CD4-positive, alpha-beta T cell (primary cell): ENCODE measurements at regions of chr4 and their contacts with region 1.

Region 1: DNA sequence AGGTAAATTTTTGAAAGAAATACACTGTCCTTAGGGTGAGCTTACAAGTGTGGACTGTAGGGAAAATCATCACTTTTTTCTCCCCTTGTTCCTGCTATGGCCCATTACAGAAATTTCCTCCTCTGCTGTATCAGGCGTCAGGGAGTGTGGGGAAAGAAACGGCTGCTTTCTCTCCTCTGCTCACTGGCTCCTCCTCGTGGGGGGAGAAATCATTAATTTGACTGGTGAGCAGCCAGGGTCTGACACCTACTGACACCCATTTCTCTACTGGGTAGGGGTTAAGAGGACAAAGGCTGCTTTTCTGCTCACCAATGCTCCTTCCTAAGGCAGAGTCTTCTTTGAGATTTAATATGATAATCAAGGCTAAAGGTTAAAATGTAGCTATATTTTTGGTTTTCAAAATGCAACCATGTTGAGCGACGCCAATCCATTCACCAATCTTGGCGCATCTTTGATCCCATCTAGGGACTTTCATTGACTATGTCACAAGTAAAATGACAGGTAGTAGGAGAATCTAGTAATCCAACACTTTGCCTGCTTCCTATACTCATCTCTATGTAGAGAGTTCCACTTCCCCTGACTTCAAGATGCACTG is 25.1 kb downstream of the SETD7 start:
- DNase-seq: peak; percentile 40 to 75 (median 53)
- ATAC-seq: peak; percentile 84
- H3K4me3 ChIP-seq: no peak overlapping the region
- H3K4me3 Mint-ChIP-seq: no peak overlapping the region
- H3K27ac ChIP-seq: no peak overlapping the region
- H3K27ac Mint-ChIP-seq: no peak overlapping the region
- H3K4me1 ChIP-seq: peaks cover 9% of the 10 kb centered on the region
- H3K4me1 Mint-ChIP-seq: peaks cover 5% of the 10 kb centered on the region
- H3K27me3 ChIP-seq: no peaks in the 10 kb centered on the region
- H3K27me3 Mint-ChIP-seq: no peaks in the 10 kb centered on the region
- CTCF ChIP-seq: peak; percentile 76

Region 2: DNA sequence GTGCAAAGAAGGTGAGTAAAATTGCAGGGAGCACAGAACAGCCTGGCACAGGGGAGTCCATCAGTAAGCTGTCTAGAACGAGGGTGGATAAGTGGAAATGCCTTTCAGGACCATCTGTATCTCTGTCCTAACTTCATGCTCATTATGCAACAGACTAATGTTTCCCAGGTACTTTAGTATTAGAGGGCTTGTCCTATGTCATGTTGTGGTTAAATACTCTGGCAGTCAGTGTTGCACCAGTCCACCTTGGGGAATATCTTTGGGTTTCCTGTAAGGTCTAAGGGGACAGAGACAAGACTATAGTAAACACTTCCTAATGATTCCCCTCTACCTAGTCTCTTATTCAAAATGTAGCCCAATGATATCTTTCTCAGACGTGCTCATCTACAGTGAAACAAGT is 494.0 kb before region 1 on chr4:
- CTCF ChIA-PET with region 1: no interaction called
- POLR2A ChIA-PET with region 1: no interaction called
- intact Hi-C with region 1: no loop called
- DNase-seq: no peak
- ATAC-seq: no peak
- H3K4me3 ChIP-seq: no peak overlapping the region
- H3K4me3 Mint-ChIP-seq: no peak overlapping the region
- H3K27ac ChIP-seq: no peak overlapping the region
- H3K27ac Mint-ChIP-seq: no peak overlapping the region
- H3K4me1 ChIP-seq: no peaks in the 10 kb centered on the region
- H3K4me1 Mint-ChIP-seq: peaks cover 15% of the 10 kb centered on the region
- H3K27me3 ChIP-seq: no peaks in the 10 kb centered on the region
- H3K27me3 Mint-ChIP-seq: no peaks in the 10 kb centered on the region
- CTCF ChIP-seq: no peak

Region 3: GRCh38 chr4:139229534-139230039 is 301.3 kb before region 1 on chr4:
- CTCF ChIA-PET with region 1: interaction called, 4 read pairs
- POLR2A ChIA-PET with region 1: no interaction called
- intact Hi-C with region 1: loop called (anchors 5 to 10 kb)
- DNase-seq: peak in 4 of 14 experiments; percentile 17 to 71 (median 67)
- ATAC-seq: peak; percentile 71
- H3K4me3 ChIP-seq: no peak overlapping the region
- H3K4me3 Mint-ChIP-seq: no peak overlapping the region
- H3K27ac ChIP-seq: no peak overlapping the region
- H3K27ac Mint-ChIP-seq: no peak overlapping the region
- H3K4me1 ChIP-seq: no peaks in the 10 kb centered on the region
- H3K4me1 Mint-ChIP-seq: no peaks in the 10 kb centered on the region
- H3K27me3 ChIP-seq: no peaks in the 10 kb centered on the region
- H3K27me3 Mint-ChIP-seq: no peaks in the 10 kb centered on the region
- CTCF ChIP-seq: peak; percentile 82

Region 4: DNA sequence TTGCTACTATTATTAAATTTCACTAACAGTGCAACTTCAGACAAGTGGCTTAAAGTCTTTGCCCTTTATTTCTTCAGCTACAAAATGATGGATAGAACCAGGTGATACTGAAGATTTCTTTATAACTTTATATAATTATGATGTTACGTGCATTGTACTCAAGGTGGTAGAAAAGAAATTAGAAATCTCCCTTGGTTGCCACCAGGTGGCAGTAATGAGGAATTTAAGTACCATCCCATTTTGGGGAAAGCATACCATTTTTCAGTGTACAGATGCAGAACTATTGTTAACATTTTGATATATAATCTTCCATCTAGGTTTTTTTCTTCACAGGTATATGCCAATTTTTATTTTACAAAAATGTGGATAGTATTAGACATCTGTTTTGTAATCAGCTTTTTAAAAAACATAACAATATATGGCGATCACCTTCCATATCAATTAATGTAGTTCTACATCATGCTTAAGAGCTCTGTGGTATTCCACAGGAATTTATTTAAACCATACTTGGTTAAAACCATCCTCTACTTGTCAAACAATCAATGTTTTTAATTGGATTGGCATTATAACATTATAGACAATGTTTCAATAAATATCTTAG is 114.8 kb before region 1 on chr4:
- CTCF ChIA-PET with region 1: no interaction called
- POLR2A ChIA-PET with region 1: no interaction called
- intact Hi-C with region 1: loop called (anchors 2 to 5 kb)
- DNase-seq: peak in 4 of 14 experiments; percentile 50 to 77 (median 61)
- ATAC-seq: peak; percentile 32
- H3K4me3 ChIP-seq: no peak overlapping the region
- H3K4me3 Mint-ChIP-seq: no peak overlapping the region
- H3K27ac ChIP-seq: no peak overlapping the region
- H3K27ac Mint-ChIP-seq: no peak overlapping the region
- H3K4me1 ChIP-seq: peaks cover 5% of the 10 kb centered on the region
- H3K4me1 Mint-ChIP-seq: peaks cover 5% of the 10 kb centered on the region
- H3K27me3 ChIP-seq: no peaks in the 10 kb centered on the region
- H3K27me3 Mint-ChIP-seq: no peaks in the 10 kb centered on the region
- CTCF ChIP-seq: peak; percentile 77

Region 5: DNA sequence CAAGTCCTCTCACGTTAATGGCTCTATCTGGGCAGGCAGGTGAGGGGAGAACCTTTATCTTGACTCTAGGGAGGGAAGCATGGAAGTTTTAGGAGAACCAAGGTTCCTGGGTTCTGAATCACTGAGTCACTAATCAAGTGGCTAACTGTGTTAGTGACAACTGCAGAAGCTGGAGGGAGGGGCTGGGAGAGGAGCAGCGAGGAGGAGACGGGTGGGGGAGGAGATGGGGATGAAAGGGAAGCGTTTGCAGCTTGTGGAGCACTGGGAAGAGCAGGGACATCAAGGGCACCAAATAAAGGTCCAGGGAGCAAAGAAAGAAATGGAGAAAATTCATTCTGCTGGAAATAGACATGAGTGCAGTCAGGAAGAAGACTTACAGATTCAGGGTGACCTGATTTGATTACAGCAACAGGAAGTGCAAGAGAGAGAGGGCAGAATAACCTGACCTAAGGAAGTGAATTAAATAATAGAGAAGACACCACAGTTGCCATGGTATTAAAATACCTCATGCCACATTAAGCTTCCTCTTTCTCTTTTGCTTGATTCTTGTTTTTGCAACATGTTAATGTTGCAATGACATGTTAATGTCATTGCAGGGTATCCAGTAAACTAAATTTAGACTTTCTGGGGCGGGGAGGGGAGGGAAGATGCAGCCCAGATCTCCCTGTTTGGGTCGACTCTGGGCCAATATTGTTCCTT is 29.6 kb after region 1 on chr4:
- CTCF ChIA-PET with region 1: interaction called, 3 read pairs
- POLR2A ChIA-PET with region 1: interaction called, 9 read pairs
- intact Hi-C with region 1: loop called (anchors 2 to 5 kb)
- DNase-seq: peak in 4 of 14 experiments; percentile 9 to 84 (median 76)
- ATAC-seq: peak; percentile 35
- H3K4me3 ChIP-seq: peak overlapping the region; percentile 4
- H3K4me3 Mint-ChIP-seq: peak overlapping the region; percentile 78
- H3K27ac ChIP-seq: peak overlapping the region in 1 of 2 donors; percentile 65
- H3K27ac Mint-ChIP-seq: peak overlapping the region; percentile 99
- H3K4me1 ChIP-seq: peaks cover 36% of the 10 kb centered on the region
- H3K4me1 Mint-ChIP-seq: peaks cover 42% of the 10 kb centered on the region
- H3K27me3 ChIP-seq: no peaks in the 10 kb centered on the region
- H3K27me3 Mint-ChIP-seq: peaks cover 9% of the 10 kb centered on the region
- CTCF ChIP-seq: no peak

Region 6: GRCh38 chr4:139642364-139642763 is 111.4 kb after region 1 on chr4:
- CTCF ChIA-PET with region 1: no interaction called
- POLR2A ChIA-PET with region 1: no interaction called
- intact Hi-C with region 1: no loop called
- DNase-seq: no peak
- ATAC-seq: no peak
- H3K4me3 ChIP-seq: no peak overlapping the region
- H3K4me3 Mint-ChIP-seq: no peak overlapping the region
- H3K27ac ChIP-seq: no peak overlapping the region
- H3K27ac Mint-ChIP-seq: no peak overlapping the region
- H3K4me1 ChIP-seq: no peaks in the 10 kb centered on the region
- H3K4me1 Mint-ChIP-seq: no peaks in the 10 kb centered on the region
- H3K27me3 ChIP-seq: no peaks in the 10 kb centered on the region
- H3K27me3 Mint-ChIP-seq: peaks cover 5% of the 10 kb centered on the region
- CTCF ChIP-seq: no peak

Region 7: GRCh38 chr4:139720540-139721205 is 189.7 kb after region 1 on chr4:
- CTCF ChIA-PET with region 1: no interaction called
- POLR2A ChIA-PET with region 1: no interaction called
- intact Hi-C with region 1: no loop called
- DNase-seq: no peak
- ATAC-seq: no peak
- H3K4me3 ChIP-seq: no peak overlapping the region
- H3K4me3 Mint-ChIP-seq: no peak overlapping the region
- H3K27ac ChIP-seq: no peak overlapping the region
- H3K27ac Mint-ChIP-seq: no peak overlapping the region
- H3K4me1 ChIP-seq: no peaks in the 10 kb centered on the region
- H3K4me1 Mint-ChIP-seq: no peaks in the 10 kb centered on the region
- H3K27me3 ChIP-seq: no peaks in the 10 kb centered on the region
- H3K27me3 Mint-ChIP-seq: no peaks in the 10 kb centered on the region
- CTCF ChIP-seq: no peak